Activated CD4-positive, alpha-beta T cell treated with anti-CD3 and anti-CD28 coated beads for 36 hours (primary cell): ENCODE measurements at regions of chr19 and their contacts with region 1.

Region 1: DNA sequence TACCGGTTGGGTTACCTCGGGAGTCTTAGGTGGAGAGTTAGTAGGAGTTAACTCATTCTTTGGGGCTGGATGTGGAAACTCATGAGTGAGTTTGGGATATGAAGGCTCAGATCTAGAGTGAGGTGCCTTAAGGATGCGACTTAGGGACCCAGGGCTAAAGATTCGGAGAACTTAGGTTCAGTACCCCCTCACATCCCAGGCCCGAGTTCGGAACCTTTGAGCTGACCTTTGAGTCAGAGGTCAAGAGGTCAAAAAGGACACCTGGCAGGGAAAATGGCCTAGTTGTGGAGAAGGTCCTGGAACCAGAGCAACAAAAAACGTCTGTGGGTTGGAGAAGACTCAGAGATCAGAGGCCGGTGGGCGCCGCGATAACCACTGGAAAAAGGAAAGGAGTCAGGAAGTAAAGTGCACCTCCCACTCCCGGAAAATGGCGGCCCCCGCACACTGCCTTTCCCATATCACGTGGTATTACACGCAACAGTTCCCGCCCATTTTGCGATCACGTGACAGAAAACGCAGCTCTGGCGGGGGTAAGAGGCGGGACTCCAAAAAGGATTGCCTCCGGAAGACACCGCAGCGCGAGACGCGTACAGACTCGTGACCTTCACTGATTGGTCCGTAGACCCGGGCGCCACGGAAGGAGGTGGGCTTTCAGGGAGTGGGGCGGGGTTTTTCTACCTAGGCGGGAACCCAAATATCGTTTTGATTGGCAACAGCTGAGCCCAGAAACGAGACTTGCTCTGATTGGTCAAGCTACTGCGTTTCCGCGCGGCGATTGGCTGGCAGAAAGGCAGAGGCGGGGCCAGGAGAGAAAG is at the start of gene ACTMAP:
- DNase-seq: peak; percentile 100
- ATAC-seq: peak; percentile 90
- H3K4me3 Mint-ChIP-seq: peak within 1 kb of the TSS; percentile 81
- H3K27ac Mint-ChIP-seq: peak within 1 kb of the TSS; percentile 99
- H3K4me1 Mint-ChIP-seq: peaks cover 34% of the 10 kb centered on the region
- H3K27me3 Mint-ChIP-seq: no peaks in the 10 kb centered on the region
- total RNA-seq, gene ACTMAP: 15.0 to 18.0 TPM

Region 2: DNA sequence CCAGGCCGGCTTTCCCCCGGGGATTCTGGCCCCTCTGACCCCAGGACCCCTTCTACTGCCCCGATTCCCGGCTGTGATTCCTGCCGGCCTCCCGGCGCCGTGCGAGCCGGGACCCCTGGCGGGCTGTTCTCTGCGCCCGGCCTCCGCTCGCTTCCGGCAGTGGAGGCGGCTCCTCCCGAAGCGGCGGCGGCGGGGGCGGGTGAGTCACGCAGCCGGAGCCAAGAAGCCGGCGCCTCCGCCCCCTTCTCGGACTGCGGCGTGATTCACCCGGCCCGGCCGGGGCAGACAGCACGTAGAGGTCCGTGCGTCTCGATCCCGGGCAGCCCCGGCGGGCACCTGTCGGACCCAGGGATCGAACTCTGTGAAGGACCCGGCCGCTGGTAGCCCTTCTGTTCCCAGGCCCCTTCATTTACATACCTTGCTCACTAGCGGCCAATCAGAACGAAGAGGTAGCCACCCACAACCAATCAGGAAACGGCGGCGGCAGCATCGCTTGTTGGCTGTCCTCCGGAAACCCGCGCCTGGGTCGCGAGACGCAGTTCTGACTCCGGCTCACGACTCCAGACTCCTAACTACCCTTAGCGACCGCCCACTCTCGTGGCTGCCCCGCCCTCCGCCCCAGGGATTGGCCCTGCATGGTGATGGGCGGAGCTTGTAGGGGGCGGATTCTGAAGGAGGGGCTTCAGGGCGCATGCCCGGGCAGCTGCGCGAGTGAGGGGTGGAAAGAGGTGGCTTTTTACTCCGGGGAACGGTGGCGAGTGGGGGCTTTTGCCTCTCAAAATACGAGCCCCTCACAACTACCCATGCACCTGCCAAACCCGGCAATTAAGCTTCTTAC is 324.6 kb before region 1 on chr19 and contains the start of gene SERTAD1:
- CTCF ChIA-PET with region 1: no interaction called
- POLR2A ChIA-PET with region 1: interaction called, 4 read pairs
- intact Hi-C with region 1: loop called in 1 of 2 experiments (anchors 2 kb)
- DNase-seq: peak; percentile 100
- ATAC-seq: peak; percentile 91
- H3K4me3 Mint-ChIP-seq: peak within 1 kb of the TSS; percentile 89
- H3K27ac Mint-ChIP-seq: peak within 1 kb of the TSS; percentile 96
- H3K4me1 Mint-ChIP-seq: peaks cover 20% of the 10 kb centered on the region
- H3K27me3 Mint-ChIP-seq: no peaks in the 10 kb centered on the region
- total RNA-seq, gene SERTAD1: 10.0 to 14.7 TPM

Region 3: GRCh38 chr19:40662921-40663694 is 87.2 kb before region 1 on chr19:
- CTCF ChIA-PET with region 1: interaction called, 4 read pairs
- POLR2A ChIA-PET with region 1: interaction called, 4 read pairs
- intact Hi-C with region 1: loop called (anchors 1 to 2 kb)
- DNase-seq: peak; percentile 96
- ATAC-seq: peak; percentile 81
- H3K4me3 Mint-ChIP-seq: peak overlapping the region; percentile 66
- H3K27ac Mint-ChIP-seq: peak overlapping the region; percentile 77
- H3K4me1 Mint-ChIP-seq: peaks cover 19% of the 10 kb centered on the region
- H3K27me3 Mint-ChIP-seq: no peaks in the 10 kb centered on the region

Region 4: GRCh38 chr19:40777937-40778705 is 27.9 kb after region 1 on chr19 and contains the start of gene RAB4B:
- CTCF ChIA-PET with region 1: interaction called, 24 read pairs
- POLR2A ChIA-PET with region 1: interaction called, 46 read pairs
- intact Hi-C with region 1: loop called (anchors 1 kb)
- DNase-seq: peak; percentile 100
- ATAC-seq: peak; percentile 79
- H3K4me3 Mint-ChIP-seq: peak within 1 kb of the TSS; percentile 84
- H3K27ac Mint-ChIP-seq: peak within 1 kb of the TSS; percentile 94
- H3K4me1 Mint-ChIP-seq: peaks cover 38% of the 10 kb centered on the region
- H3K27me3 Mint-ChIP-seq: no peaks in the 10 kb centered on the region
- total RNA-seq, gene RAB4B: 26.4 to 33.7 TPM

Region 5: DNA sequence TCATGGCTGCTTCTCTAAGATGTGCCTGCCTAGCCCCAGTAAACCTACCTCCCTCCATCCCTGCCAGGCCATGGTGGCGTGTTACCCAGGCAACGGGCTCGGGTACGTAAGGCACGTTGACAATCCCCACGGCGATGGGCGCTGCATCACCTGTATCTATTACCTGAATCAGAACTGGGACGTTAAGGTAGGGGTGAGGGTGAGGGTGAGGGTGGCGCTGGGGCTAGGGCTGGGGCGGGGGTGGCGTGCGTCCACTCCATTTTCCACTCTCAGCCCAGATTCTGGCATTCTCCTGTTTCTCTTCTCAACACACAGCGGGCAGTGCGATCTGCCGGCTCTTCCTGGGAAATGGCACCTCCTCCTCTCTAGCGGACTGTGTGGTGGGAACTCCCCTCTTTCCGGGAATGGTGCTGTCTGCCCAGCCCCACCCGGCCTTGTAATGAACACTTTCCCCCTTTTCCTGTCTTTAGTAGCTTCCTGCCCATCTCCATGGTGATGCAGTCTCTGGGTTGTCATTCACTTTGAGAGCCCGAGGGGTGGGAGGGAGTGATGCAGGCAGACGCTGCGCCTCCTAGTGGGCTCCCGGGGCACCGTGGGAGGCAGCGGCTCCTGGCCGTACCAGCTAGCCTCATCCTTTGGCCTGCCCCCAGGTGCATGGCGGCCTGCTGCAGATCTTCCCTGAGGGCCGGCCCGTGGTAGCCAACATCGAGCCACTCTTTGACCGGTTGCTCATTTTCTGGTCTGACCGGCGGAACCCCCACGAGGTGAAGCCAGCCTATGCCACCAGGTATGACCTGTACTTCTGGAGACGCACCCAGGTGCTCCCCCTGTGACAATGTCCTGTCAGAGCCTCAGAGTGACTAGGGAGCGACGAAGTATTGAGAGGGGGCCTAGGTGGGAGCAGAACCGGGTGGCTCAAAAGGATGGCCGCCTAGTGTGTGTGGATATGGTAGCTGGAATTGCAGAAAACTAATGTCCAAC is 56.5 kb after region 1 on chr19:
- CTCF ChIA-PET with region 1: interaction called, 7 read pairs
- POLR2A ChIA-PET with region 1: interaction called, 4 read pairs
- intact Hi-C with region 1: loop called in 1 of 2 experiments (anchors 2 kb)
- DNase-seq: peak; percentile 90
- ATAC-seq: peak; percentile 51
- H3K4me3 Mint-ChIP-seq: peak overlapping the region; percentile 55
- H3K27ac Mint-ChIP-seq: peak overlapping the region; percentile 89
- H3K4me1 Mint-ChIP-seq: peaks cover 72% of the 10 kb centered on the region
- H3K27me3 Mint-ChIP-seq: no peaks in the 10 kb centered on the region

Region 6: DNA sequence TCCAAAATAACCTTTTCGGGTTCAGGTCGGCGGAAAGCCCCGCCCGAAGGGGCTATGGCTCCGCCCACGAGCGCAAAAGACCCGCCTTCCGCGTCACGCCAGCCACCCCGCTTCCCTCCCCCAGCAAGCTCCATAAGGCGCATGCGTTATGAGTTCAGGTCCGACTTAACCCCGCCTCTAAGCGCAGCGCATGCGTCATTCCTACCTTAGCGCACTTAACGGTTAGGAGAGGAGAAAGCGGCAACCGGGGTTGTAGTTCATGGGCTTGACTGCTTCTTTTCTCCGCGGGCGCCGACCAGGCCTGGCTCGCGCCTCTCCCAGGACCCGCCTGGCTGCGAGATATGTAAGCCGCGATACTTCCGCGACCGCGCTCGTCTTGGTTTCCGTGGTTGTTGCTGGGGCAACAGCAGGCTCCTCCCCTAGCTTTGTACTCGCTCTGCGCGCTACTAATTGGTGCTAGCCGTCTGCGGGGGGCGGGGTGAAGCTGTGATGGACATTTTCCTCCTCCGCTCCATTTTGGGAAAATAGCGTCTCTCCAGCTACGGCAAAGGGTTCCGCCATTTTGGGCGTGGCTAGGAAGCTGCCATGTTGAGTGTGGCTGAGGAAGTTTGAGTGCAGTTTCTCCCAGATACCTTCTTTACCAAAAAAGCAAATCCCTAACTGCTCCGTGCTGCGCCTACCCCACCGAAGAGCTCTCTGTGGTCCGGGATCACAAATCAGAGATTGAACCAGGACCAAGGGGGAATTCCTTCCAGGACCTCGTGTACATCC is 613.7 kb after region 1 on chr19 and contains the start of gene B9D2:
- CTCF ChIA-PET with region 1: no interaction called
- POLR2A ChIA-PET with region 1: no interaction called
- intact Hi-C with region 1: loop called in 1 of 2 experiments (anchors 1 kb)
- DNase-seq: peak; percentile 99
- ATAC-seq: peak; percentile 95
- H3K4me3 Mint-ChIP-seq: peak within 1 kb of the TSS; percentile 92
- H3K27ac Mint-ChIP-seq: peak within 1 kb of the TSS; percentile 98
- H3K4me1 Mint-ChIP-seq: peaks cover 29% of the 10 kb centered on the region
- H3K27me3 Mint-ChIP-seq: no peaks in the 10 kb centered on the region
- total RNA-seq, gene B9D2: 4.0 to 5.2 TPM